ENCODE measurements at regions of chr15 and their contacts with region 1.

Region 1: GRCh38 chr15:79004336-79004735 is 59.5 kb upstream of the CTSH start:
- DNase-seq: peak; percentile 54
- H3K4me3 ChIP-seq: no peak overlapping the region
- H3K27ac ChIP-seq: no peak overlapping the region
- H3K4me1 ChIP-seq: peaks cover 12% of the 10 kb centered on the region
- H3K27me3 ChIP-seq: no peaks in the 10 kb centered on the region
- CTCF ChIP-seq: no peak
- POLR2A ChIP-seq: no peak

Region 2: DNA sequence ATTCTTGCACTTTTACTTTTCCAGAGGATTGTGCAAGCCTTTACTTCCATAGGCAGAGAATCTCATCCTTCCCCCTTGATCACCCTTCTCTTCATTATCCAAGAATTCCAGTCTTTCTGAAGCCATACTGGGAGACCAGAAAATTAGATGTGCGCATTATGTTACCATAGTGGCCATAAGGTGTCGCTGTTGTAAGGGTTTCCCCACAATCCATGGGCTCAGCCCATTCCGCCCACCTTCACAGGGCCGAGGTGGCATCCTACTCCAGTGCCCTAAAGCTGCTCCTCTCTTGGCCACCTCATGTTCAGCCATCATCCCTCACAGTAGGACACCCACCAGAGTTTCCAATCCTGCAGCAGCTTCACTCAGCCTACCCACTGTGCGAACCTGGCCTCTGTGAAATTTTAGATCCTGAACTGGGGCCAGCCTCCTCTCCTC is 94.5 kb before region 1 on chr15:
- CTCF ChIA-PET with region 1: interaction called, 86 read pairs
- POLR2A ChIA-PET with region 1: no interaction called
- dilution Hi-C with region 1: no loop called
- intact Hi-C with region 1: loop called (anchors 1 kb)
- DNase-seq: peak; percentile 52
- H3K4me3 ChIP-seq: no peak overlapping the region
- H3K27ac ChIP-seq: no peak overlapping the region
- H3K4me1 ChIP-seq: no peaks in the 10 kb centered on the region
- H3K27me3 ChIP-seq: no peaks in the 10 kb centered on the region
- CTCF ChIP-seq: peak; percentile 61 to 65
- POLR2A ChIP-seq: no peak

Region 3: GRCh38 chr15:78922527-78923414 is 81.6 kb before region 1 on chr15:
- CTCF ChIA-PET with region 1: interaction called, 10 read pairs
- POLR2A ChIA-PET with region 1: no interaction called
- dilution Hi-C with region 1: no loop called
- intact Hi-C with region 1: no loop called
- DNase-seq: no peak
- H3K4me3 ChIP-seq: no peak overlapping the region
- H3K27ac ChIP-seq: no peak overlapping the region
- H3K4me1 ChIP-seq: no peaks in the 10 kb centered on the region
- H3K27me3 ChIP-seq: no peaks in the 10 kb centered on the region
- CTCF ChIP-seq: no peak
- POLR2A ChIP-seq: no peak

Region 4: GRCh38 chr15:78988361-78988911 is 15.9 kb before region 1 on chr15:
- CTCF ChIA-PET with region 1: interaction called, 18 read pairs
- POLR2A ChIA-PET with region 1: no interaction called
- dilution Hi-C with region 1: no loop called
- intact Hi-C with region 1: loop called (anchors 1 kb)
- DNase-seq: peak; percentile 90
- H3K4me3 ChIP-seq: no peak overlapping the region
- H3K27ac ChIP-seq: no peak overlapping the region
- H3K4me1 ChIP-seq: peaks cover 12% of the 10 kb centered on the region
- H3K27me3 ChIP-seq: peaks cover 0 to 2% of the 10 kb centered on the region in 2 experiments
- CTCF ChIP-seq: no peak
- POLR2A ChIP-seq: no peak